ENCODE measurements at regions of chr6 and their contacts with region 1.

Region 1: GRCh38 chr6:137707590-137708360 is 159.3 kb upstream of the TNFAIP3 start:
- DNase-seq: peak; percentile 97
- ATAC-seq: peak; percentile 75
- H3K4me3 ChIP-seq: peak overlapping the region; percentile 49; the same call in 1 of the 2 replicates
- H3K27ac ChIP-seq: peak overlapping the region; percentile 64
- H3K4me1 ChIP-seq: peaks cover 39% of the 10 kb centered on the region
- H3K27me3 ChIP-seq: no peaks in the 10 kb centered on the region
- CTCF ChIP-seq: peak; percentile 67 to 88 (median 83); a peak in 5 of 6 replicates
- EP300 ChIP-seq: peak; percentile 33 to 57; a peak in 2 of 4 replicates
- POLR2A ChIP-seq: no peak
- RAD21 ChIP-seq: peak; percentile 91

Region 2: GRCh38 chr6:137736048-137736818 is 28.5 kb after region 1 on chr6:
- CTCF ChIA-PET with region 1: interaction called, 10 read pairs
- POLR2A ChIA-PET with region 1: interaction called, 6 read pairs
- RAD21 ChIA-PET with region 1: interaction called, 3 read pairs
- SMC1A ChIA-PET with region 1: interaction called, 22 read pairs
- in situ Hi-C with region 1: no loop called
- intact Hi-C with region 1: no loop called
- DNase-seq: no peak
- ATAC-seq: peak; percentile 67
- H3K4me3 ChIP-seq: no peak overlapping the region
- H3K27ac ChIP-seq: no peak overlapping the region
- H3K4me1 ChIP-seq: peaks cover 12% of the 10 kb centered on the region
- H3K27me3 ChIP-seq: no peaks in the 10 kb centered on the region
- CTCF ChIP-seq: no peak
- EP300 ChIP-seq: no peak; a peak in 1 of 4 replicates
- POLR2A ChIP-seq: peak; percentile 35; the same call in 1 of the 2 replicates
- RAD21 ChIP-seq: no peak

Region 3: GRCh38 chr6:137791281-137792159 is 83.7 kb after region 1 on chr6:
- CTCF ChIA-PET with region 1: interaction called, 14 read pairs
- POLR2A ChIA-PET with region 1: no interaction called
- RAD21 ChIA-PET with region 1: interaction called, 23 read pairs
- SMC1A ChIA-PET with region 1: interaction called, 35 read pairs
- in situ Hi-C with region 1: no loop called
- intact Hi-C with region 1: no loop called
- DNase-seq: no peak
- ATAC-seq: peak; percentile 29
- H3K4me3 ChIP-seq: peak overlapping the region; percentile 25
- H3K27ac ChIP-seq: peak overlapping the region; percentile 89
- H3K4me1 ChIP-seq: peaks cover 18% of the 10 kb centered on the region
- H3K27me3 ChIP-seq: no peaks in the 10 kb centered on the region
- CTCF ChIP-seq: no peak
- EP300 ChIP-seq: no peak
- POLR2A ChIP-seq: no peak
- RAD21 ChIP-seq: no peak

Region 4: DNA sequence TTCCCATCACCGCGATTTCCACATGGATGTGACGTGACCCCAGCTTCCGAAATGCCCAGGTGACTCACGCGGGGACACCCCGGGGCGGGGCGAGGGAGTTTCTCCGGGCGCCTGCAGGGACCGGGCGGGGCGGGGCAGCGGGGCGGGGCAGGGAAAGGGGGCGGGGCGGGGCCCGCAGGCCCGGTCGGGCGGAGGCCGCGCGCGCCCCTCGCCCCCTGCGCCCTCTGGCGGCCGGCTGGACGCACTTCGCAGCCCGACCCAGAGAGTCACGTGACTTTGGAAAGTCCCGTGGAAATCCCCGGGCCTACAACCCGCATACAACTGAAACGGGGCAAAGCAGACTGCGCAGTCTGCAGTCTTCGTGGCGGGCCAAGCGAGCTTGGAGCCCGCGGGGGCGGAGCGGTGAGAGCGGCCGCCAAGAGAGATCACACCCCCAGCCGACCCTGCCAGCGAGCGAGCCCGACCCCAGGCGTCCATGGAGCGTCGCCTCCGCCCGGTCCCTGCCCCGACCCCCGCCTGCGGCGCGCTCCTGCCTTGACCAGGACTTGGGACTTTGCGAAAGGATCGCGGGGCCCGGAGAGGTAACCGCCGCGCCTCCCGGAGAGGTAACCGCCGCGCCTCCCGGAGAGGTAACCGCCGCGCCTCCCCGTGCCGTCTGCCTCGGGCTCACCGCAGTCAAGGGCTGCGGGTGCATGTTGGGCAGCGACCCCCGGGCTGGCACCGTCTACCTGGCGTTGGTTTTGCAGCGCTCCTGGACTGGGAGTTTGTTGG is 159.3 kb after region 1 on chr6 and contains the start of gene TNFAIP3:
- CTCF ChIA-PET with region 1: interaction called, 84 read pairs
- POLR2A ChIA-PET with region 1: interaction called, 13 read pairs
- RAD21 ChIA-PET with region 1: interaction called, 80 read pairs
- SMC1A ChIA-PET with region 1: interaction called, 117 read pairs
- in situ Hi-C with region 1: loop called (anchors 5 kb)
- intact Hi-C with region 1: loop called (anchors 1 kb)
- DNase-seq: peak; percentile 84
- ATAC-seq: peak; percentile 78
- H3K4me3 ChIP-seq: peak within 1 kb of the TSS; percentile 99
- H3K27ac ChIP-seq: peak within 1 kb of the TSS; percentile 72
- H3K4me1 ChIP-seq: peaks cover 5% of the 10 kb centered on the region; the same call in 1 of the 2 replicates
- H3K27me3 ChIP-seq: no peaks in the 10 kb centered on the region
- CTCF ChIP-seq: peak; percentile 63 to 83 (median 70)
- EP300 ChIP-seq: peak; percentile 64 to 90
- POLR2A ChIP-seq: peak; percentile 95
- RAD21 ChIP-seq: peak; percentile 73
- polyA plus RNA-seq, gene TNFAIP3: 18.0 to 31.5 TPM

Region 5: DNA sequence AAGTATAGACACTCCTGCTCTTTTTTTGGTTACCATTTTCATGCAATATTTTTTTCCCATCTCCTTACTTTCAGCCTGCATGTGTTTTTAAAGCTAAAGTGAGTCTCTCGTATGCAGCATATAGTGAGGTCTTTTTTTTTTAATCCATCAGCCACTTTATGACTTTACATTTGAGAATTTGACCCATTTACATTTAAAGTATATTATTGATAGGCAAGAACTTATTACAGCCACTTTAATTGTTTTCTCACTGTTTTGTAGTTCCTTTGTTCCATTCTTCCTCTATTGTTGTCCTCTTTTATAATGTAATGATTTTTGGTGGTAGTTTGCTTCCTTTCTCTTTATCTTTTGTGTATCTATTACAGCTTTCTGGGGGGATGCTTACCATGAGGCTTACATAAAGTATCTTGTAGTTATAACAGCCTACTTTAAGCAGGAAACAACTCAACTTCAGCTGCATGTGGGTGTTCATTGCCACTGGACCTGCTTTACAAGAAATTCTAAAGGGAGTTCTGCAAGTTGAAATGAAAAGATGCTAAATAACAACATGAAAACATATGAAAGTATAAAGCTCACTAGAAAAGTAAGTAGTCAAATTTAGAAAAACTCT is 231.1 kb after region 1 on chr6:
- CTCF ChIA-PET with region 1: interaction called, 174 read pairs
- POLR2A ChIA-PET with region 1: interaction called, 4 read pairs
- RAD21 ChIA-PET with region 1: interaction called, 127 read pairs
- SMC1A ChIA-PET with region 1: interaction called, 84 read pairs
- in situ Hi-C with region 1: loop called (anchors 5 kb)
- intact Hi-C with region 1: loop called (anchors 1 kb)
- DNase-seq: no peak
- ATAC-seq: no peak
- H3K4me3 ChIP-seq: no peak overlapping the region
- H3K27ac ChIP-seq: peak overlapping the region; percentile 82
- H3K4me1 ChIP-seq: peaks cover 35% of the 10 kb centered on the region
- H3K27me3 ChIP-seq: no peaks in the 10 kb centered on the region
- CTCF ChIP-seq: no peak
- EP300 ChIP-seq: no peak
- POLR2A ChIP-seq: no peak
- RAD21 ChIP-seq: no peak

Region 6: DNA sequence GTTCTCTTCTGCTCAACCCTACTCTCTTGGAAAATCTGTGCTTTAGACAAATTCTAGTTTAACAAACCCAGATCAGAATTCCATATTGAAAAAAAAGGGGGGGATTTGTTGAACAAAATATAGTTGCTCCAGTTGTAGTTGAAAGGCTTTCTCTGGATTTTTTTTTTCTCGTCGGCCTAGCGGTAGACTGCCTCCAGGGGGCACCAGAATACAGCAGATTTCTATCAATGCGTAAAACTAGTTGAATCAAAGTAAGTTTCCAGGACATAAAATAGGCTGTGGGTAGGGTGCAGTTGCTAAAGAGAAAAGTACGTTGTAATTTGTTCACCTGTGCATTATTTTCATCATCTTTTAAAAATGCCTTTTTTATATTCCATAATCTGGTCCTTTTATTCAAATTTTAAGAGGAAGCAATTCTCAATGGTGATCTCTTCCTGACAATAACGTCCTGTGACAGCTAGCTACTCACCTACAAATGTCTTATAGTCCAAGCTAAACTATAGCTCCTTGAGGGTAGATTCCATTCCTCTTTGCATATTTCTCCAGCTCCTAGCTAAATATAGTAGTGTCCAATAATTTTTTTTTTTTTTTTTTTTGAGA is 294.1 kb after region 1 on chr6:
- CTCF ChIA-PET with region 1: interaction called, 111 read pairs
- POLR2A ChIA-PET with region 1: interaction called, 3 read pairs
- RAD21 ChIA-PET with region 1: interaction called, 51 read pairs
- SMC1A ChIA-PET with region 1: interaction called, 101 read pairs
- in situ Hi-C with region 1: loop called (anchors 10 kb)
- intact Hi-C with region 1: loop called (anchors 1 kb)
- DNase-seq: no peak
- ATAC-seq: peak; percentile 62
- H3K4me3 ChIP-seq: no peak overlapping the region
- H3K27ac ChIP-seq: no peak overlapping the region
- H3K4me1 ChIP-seq: no peaks in the 10 kb centered on the region
- H3K27me3 ChIP-seq: no peaks in the 10 kb centered on the region
- CTCF ChIP-seq: peak; percentile 73 to 91 (median 85)
- EP300 ChIP-seq: no peak
- POLR2A ChIP-seq: no peak
- RAD21 ChIP-seq: peak; percentile 89

Region 7: DNA sequence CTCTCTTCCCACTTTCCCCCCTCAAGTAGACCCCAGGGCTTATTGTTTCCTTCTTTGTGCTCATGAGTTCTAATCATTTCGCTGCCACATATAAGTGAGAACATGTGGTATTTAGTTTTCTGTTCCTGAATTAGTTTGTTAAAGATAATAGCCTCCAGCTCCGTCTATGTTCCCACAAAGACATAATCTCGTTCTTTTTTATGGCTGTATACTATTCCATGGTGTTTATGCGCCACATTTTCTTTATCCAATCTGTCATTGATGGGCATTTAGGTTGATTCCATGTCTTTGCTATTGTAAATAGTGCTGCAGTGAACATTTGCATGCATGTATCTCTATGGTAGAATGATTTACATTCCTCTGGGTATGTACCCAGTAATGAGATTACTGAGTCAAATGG is 416.3 kb after region 1 on chr6:
- CTCF ChIA-PET with region 1: no interaction called
- POLR2A ChIA-PET with region 1: no interaction called
- RAD21 ChIA-PET with region 1: no interaction called
- SMC1A ChIA-PET with region 1: no interaction called
- in situ Hi-C with region 1: no loop called
- intact Hi-C with region 1: no loop called
- DNase-seq: no peak
- ATAC-seq: no peak
- H3K4me3 ChIP-seq: no peak overlapping the region
- H3K27ac ChIP-seq: no peak overlapping the region
- H3K4me1 ChIP-seq: no peaks in the 10 kb centered on the region
- H3K27me3 ChIP-seq: peaks cover 0 to 2% of the 10 kb centered on the region in 2 experiments; a peak in 2 of 4 replicates
- CTCF ChIP-seq: no peak
- EP300 ChIP-seq: no peak
- POLR2A ChIP-seq: no peak
- RAD21 ChIP-seq: no peak

Region 8: DNA sequence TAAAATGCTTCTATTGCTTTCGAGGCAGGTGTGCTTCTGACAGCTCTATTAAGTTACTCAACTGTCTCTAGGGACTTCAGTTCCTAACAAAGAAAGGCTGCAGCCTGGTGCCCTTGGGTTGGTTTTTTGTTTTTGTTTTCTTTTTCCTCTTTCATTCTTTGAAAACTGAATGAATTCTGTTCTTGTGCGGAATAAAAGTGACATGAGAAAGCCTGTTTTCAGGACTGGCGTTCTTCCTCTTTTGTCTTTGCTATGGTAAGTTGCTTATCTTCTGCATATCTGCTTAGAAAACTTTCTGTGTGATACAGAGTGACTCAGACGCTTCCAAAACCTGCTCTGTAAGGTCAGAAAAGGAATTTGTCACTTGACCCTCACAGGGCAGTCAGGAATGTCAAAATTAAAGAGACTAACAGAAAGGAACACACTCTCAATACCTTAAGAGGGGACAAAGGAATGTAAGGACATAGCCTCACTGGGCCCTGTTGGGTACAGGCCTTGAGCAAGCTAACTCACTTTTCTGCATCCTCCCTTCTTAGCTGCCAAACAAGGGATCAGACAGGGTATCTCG is 847.7 kb after region 1 on chr6:
- CTCF ChIA-PET with region 1: no interaction called
- POLR2A ChIA-PET with region 1: no interaction called
- RAD21 ChIA-PET with region 1: no interaction called
- SMC1A ChIA-PET with region 1: no interaction called
- in situ Hi-C with region 1: no loop called
- intact Hi-C with region 1: no loop called
- DNase-seq: peak; percentile 8
- ATAC-seq: peak; percentile 75
- H3K4me3 ChIP-seq: no peak overlapping the region
- H3K27ac ChIP-seq: no peak overlapping the region
- H3K4me1 ChIP-seq: no peaks in the 10 kb centered on the region
- H3K27me3 ChIP-seq: no peaks in the 10 kb centered on the region
- CTCF ChIP-seq: no peak
- EP300 ChIP-seq: 0 out of 4 replicates have a peak, but pooled peaks of 1 of the 2 experiments have one; percentile 16
- POLR2A ChIP-seq: no peak
- RAD21 ChIP-seq: no peak